Caco-2 (cell line): ENCODE measurements at regions of chr5 and their contacts with region 1.

Region 1: DNA sequence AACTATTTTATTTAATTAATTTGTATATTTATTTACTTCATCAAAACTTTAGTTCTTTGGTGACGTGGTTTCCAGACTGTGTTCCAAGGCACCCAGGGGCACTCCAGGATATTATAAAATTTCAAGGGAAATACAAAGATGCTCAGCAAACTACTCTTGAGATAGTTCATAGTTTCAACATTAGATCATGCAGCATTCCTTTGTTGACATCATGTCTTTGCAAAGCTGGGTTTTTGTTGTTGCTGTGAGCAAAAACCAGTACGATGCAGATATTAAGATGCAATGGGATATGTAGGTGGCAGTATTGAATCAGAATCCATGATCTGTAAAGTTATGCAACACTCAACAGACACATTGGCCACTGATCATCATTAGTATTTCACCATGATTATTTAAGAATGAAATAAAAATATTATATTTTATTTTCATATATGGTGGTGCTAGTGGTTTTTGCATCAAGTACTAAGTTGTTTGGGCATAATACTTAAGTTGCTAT is 219.7 kb downstream of the ADCY2 start:
- DNase-seq: no peak
- H3K4me3 ChIP-seq: no peak overlapping the region
- H3K4me3 Mint-ChIP-seq: no peak overlapping the region
- H3K27ac Mint-ChIP-seq: no peak overlapping the region
- H3K4me1 ChIP-seq: no peaks in the 10 kb centered on the region
- H3K4me1 Mint-ChIP-seq: no peaks in the 10 kb centered on the region
- H3K27me3 ChIP-seq: no peaks in the 10 kb centered on the region
- H3K27me3 Mint-ChIP-seq: no peaks in the 10 kb centered on the region
- CTCF ChIP-seq: no peak

Region 2: DNA sequence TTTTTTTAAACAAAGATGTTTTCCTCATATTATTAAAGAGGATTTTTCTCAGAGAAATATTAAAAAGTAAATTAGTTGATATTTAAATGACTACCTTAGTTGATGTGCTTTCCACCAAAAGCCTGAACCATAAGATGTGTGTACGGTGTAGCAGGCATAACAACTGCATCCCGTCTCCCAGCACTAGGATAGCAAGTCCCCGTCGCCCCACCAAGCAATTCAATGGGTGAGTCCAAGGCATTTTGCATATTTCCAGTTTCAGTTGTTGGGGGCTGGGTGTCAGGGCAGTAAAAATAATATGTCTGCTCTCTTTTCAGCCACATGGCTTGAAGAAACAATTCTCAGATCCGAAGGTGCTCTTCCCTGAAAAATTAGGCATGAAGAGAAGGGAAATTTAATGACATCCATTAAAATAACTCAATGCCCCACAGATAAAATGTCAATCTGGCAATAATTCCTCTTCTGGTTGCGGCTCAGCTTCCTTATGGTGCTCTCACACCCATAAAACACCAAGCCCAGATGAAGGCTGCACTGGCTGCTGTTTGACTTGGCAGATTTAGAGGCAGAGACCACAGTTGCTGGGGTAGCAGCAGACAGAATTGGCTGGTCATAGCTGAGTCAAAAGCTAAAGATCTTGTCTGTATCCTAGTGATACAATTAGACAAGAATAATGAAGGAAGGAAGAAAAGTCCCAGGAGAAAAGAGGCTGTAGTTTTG is 344.1 kb before region 1 on chr5:
- CTCF ChIA-PET with region 1: no interaction called
- POLR2A ChIA-PET with region 1: no interaction called
- intact Hi-C with region 1: no loop called
- DNase-seq: no peak
- H3K4me3 ChIP-seq: no peak overlapping the region
- H3K4me3 Mint-ChIP-seq: no peak overlapping the region
- H3K27ac Mint-ChIP-seq: no peak overlapping the region
- H3K4me1 ChIP-seq: no peaks in the 10 kb centered on the region
- H3K4me1 Mint-ChIP-seq: no peaks in the 10 kb centered on the region
- H3K27me3 ChIP-seq: no peaks in the 10 kb centered on the region
- H3K27me3 Mint-ChIP-seq: peaks cover 9% of the 10 kb centered on the region
- CTCF ChIP-seq: no peak

Region 3: DNA sequence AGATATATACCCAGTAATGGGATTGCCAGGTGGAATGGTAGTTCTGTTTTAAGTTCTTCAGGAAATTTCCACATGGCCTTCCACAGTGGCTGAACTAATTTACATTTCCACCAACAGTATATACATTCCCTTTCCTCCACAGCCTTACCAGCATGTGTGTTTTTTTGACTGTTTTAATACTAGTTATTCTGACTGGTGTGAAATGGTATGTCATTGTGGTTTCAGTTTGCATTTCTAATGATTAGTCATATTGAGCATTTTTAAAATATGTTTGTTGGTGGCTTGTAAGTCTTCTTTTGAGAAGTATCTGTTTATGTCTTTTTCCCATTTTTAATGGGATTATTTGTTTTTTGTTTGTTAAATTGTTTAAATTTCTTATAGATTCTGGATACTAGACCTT is 26.4 kb after region 1 on chr5:
- CTCF ChIA-PET with region 1: no interaction called
- POLR2A ChIA-PET with region 1: no interaction called
- intact Hi-C with region 1: no loop called
- DNase-seq: no peak
- H3K4me3 ChIP-seq: no peak overlapping the region
- H3K4me3 Mint-ChIP-seq: no peak overlapping the region
- H3K27ac Mint-ChIP-seq: no peak overlapping the region
- H3K4me1 ChIP-seq: peaks cover 8% of the 10 kb centered on the region
- H3K4me1 Mint-ChIP-seq: no peaks in the 10 kb centered on the region
- H3K27me3 ChIP-seq: no peaks in the 10 kb centered on the region
- H3K27me3 Mint-ChIP-seq: peaks cover 6% of the 10 kb centered on the region
- CTCF ChIP-seq: no peak

Region 4: DNA sequence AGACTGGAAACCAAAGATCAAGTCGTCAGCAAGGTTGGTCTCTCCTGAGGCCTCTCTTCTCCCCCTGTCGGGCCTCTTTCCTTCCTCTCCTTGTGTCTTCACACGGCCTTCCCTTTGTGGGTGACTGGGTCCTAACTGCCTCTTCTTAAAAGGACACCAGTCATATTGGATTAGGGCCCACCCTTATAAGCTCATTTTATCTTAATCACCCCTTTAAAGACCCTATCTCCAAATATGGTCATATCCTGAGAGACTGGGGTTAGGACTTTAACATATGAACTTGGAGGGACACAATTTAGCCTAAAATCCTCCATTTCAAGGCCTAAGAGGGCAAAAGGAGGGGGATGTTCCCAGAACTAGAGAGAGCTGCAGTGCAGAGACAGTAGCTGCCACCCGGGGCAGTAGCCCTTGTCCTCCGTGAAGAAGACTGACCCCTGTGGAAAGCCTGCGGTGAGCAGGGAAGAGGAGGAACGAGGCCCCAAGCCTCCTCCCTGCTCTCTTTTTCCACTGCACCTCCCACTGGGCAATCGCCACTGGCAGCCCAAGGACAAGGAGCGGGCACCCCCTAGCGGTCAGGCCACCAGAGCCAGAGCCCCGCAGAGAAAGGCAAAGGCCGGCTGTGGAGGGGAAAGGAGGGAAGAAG is 200.4 kb after region 1 on chr5:
- CTCF ChIA-PET with region 1: no interaction called
- POLR2A ChIA-PET with region 1: no interaction called
- intact Hi-C with region 1: loop called (anchors 10 kb)
- DNase-seq: peak; percentile 72 to 83
- H3K4me3 ChIP-seq: no peak overlapping the region
- H3K4me3 Mint-ChIP-seq: no peak overlapping the region
- H3K27ac Mint-ChIP-seq: no peak overlapping the region
- H3K4me1 ChIP-seq: no peaks in the 10 kb centered on the region
- H3K4me1 Mint-ChIP-seq: no peaks in the 10 kb centered on the region
- H3K27me3 ChIP-seq: no peaks in the 10 kb centered on the region; the same call in 1 of the 2 replicates
- H3K27me3 Mint-ChIP-seq: peaks cover 24% of the 10 kb centered on the region
- CTCF ChIP-seq: peak; percentile 77 to 91